ENCODE measurements at regions of chr1 and their contacts with region 1.

Region 1: DNA sequence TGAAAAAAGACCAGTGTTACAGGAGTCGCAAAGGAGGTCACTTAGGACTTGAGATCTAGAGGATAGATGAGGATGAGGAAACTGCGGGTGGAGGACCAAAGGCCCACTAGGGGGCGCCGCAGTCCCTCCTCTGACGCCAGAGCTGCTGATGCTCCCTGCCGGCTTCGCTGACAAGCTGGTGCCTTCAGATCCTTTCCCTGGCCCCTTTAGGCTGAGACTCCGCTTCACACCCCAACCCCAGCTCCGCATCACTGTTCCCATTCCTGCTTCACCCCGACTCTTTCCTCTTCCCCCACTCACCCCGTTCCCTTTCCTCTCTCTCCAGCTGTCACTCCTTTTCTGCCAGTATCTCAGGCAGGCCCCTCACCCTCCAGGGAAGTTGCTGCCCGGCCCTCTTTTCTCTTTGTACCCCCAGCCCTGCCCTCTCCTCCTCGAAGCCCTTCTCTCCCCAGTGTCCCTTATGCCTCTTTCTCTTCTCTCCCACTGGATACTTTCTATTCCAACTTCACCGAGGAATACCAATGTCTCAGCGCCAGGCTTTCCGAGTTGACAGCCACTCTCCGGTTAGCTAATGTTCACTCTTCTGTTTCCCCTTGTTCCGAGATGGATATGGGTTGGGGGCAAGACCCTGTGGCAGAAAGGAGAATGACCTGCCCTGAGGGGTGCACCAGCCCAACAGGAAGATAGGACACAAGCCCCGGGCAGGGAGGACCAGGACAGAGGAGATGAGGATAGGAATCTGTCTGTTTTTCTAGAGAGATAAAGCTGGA is 4.5 kb downstream of the KCNJ9 start:
- DNase-seq: peak; percentile 48 to 79 (median 69)
- H3K4me3 ChIP-seq: no peak overlapping the region
- H3K4me3 Mint-ChIP-seq: peak overlapping the region in 3 of 7 donors; percentile 6 to 54 (median 32)
- H3K27ac ChIP-seq: no peak overlapping the region
- H3K27ac Mint-ChIP-seq: peak overlapping the region in 4 of 8 donors; percentile 21 to 83 (median 64)
- H3K4me1 ChIP-seq: peaks cover 3% of the 10 kb centered on the region
- H3K4me1 Mint-ChIP-seq: peaks cover 11 to 14% (median 14%) of the 10 kb centered on the region in 3 donors
- H3K27me3 ChIP-seq: peaks cover 13% of the 10 kb centered on the region
- H3K27me3 Mint-ChIP-seq: peaks cover 15 to 24% of the 10 kb centered on the region in 2 donors

Region 2: GRCh38 chr1:160070243-160071163 is 15.4 kb before region 1 on chr1:
- CTCF ChIA-PET with region 1: interaction called, 18 read pairs
- POLR2A ChIA-PET with region 1: interaction called, 4 read pairs
- DNase-seq: peak; percentile 60 to 82 (median 65)
- H3K4me3 ChIP-seq: peak overlapping the region; percentile 69
- H3K4me3 Mint-ChIP-seq: peak overlapping the region; percentile 83 to 93 (median 90)
- H3K27ac ChIP-seq: no peak overlapping the region
- H3K27ac Mint-ChIP-seq: peak overlapping the region in 6 of 8 donors; percentile 17 to 68 (median 48)
- H3K4me1 ChIP-seq: peaks cover 9% of the 10 kb centered on the region
- H3K4me1 Mint-ChIP-seq: peaks cover 8 to 13% (median 10%) of the 10 kb centered on the region in 3 donors
- H3K27me3 ChIP-seq: peaks cover 23% of the 10 kb centered on the region
- H3K27me3 Mint-ChIP-seq: peaks cover 26 to 64% of the 10 kb centered on the region in 2 donors

Region 3: GRCh38 chr1:160098852-160099561 is 13.1 kb after region 1 on chr1:
- CTCF ChIA-PET with region 1: interaction called, 81 read pairs
- POLR2A ChIA-PET with region 1: interaction called, 12 read pairs
- DNase-seq: peak; percentile 94 to 99 (median 97)
- H3K4me3 ChIP-seq: peak overlapping the region; percentile 63
- H3K4me3 Mint-ChIP-seq: peak overlapping the region; percentile 76 to 91 (median 81)
- H3K27ac ChIP-seq: peak overlapping the region; percentile 79
- H3K27ac Mint-ChIP-seq: peak overlapping the region; percentile 79 to 99 (median 96)
- H3K4me1 ChIP-seq: peaks cover 54% of the 10 kb centered on the region
- H3K4me1 Mint-ChIP-seq: peaks cover 49 to 82% (median 52%) of the 10 kb centered on the region in 3 donors
- H3K27me3 ChIP-seq: no peaks in the 10 kb centered on the region
- H3K27me3 Mint-ChIP-seq: peaks cover 0 to 2% of the 10 kb centered on the region in 2 donors

Region 4: GRCh38 chr1:160244209-160244608 is 158.3 kb after region 1 on chr1:
- CTCF ChIA-PET with region 1: no interaction called
- POLR2A ChIA-PET with region 1: no interaction called
- DNase-seq: no peak
- H3K4me3 ChIP-seq: no peak overlapping the region
- H3K4me3 Mint-ChIP-seq: no peak overlapping the region
- H3K27ac ChIP-seq: no peak overlapping the region
- H3K27ac Mint-ChIP-seq: peak overlapping the region in 1 of 8 donors; percentile 35
- H3K4me1 ChIP-seq: no peaks in the 10 kb centered on the region
- H3K4me1 Mint-ChIP-seq: peaks cover 11 to 38% (median 36%) of the 10 kb centered on the region in 3 donors
- H3K27me3 ChIP-seq: no peaks in the 10 kb centered on the region
- H3K27me3 Mint-ChIP-seq: no peaks in the 10 kb centered on the region